ENCODE measurements at regions of chr11 and their contacts with region 1.

Region 1: GRCh38 chr11:17077520-17078401 is at the start of gene RPS13:
- DNase-seq: peak; percentile 91
- H3K4me3 ChIP-seq: peak within 1 kb of the TSS; percentile 98
- CTCF ChIP-seq: no peak

Region 2: GRCh38 chr11:17164361-17165246 is 86.8 kb after region 1 on chr11:
- CTCF ChIA-PET with region 1: no interaction called
- POLR2A ChIA-PET with region 1: no interaction called
- DNase-seq: no peak
- H3K4me3 ChIP-seq: no peak overlapping the region
- CTCF ChIP-seq: no peak

Region 3: DNA sequence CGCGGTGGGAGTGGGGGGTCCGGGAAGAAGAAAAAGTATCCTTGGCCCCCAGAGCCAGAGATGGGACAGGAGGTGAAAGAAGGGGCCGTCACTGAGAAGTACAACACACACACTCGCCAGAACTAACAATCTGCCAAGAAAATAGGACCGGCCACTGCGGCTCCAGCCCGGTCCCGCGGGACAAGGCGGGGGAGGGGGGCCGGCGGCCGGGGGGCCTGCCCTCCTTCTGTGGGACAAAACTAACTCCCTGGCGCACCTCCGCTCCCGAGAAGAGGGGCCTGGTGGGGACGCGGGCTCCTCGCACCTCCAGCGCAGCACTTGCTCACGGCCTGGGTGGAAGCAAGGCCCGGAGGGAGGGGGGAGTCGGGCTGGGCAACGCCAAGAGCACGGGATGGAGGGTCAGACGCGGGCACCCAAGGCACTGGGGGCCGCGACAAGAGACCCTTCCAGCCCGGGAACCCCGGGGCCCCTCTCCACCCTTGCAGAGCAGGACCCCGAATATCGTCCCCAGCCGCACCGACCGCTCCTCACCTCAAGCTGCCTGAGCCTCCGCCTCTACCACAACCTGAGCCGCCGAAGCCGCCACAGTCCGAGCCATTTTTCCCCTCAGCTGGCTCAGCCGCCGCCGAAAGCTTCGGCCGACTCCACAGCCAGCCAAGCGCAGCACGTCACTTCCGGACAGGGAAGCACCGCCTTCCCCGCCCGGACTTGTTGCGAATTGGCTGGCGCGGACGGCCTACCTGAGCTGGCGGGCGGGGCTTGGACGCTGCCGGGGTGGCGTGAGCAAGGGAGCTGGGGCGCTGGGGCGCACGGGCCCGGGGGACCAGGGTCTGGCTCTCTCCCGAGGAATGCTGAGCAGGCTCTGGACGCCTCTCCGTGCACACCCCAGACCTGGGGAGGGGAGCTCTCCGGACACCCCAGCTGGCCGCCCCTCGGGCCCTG is 129.8 kb after region 1 on chr11 and contains the start of gene PIK3C2A:
- CTCF ChIA-PET with region 1: no interaction called
- POLR2A ChIA-PET with region 1: interaction called, 13 read pairs
- DNase-seq: peak; percentile 54
- H3K4me3 ChIP-seq: peak within 1 kb of the TSS; percentile 90
- CTCF ChIP-seq: no peak